Activated CD4-positive, alpha-beta T cell treated with anti-CD3 and anti-CD28 coated beads for 36 hours (primary cell): ENCODE measurements at regions of chr7 and their contacts with region 1.

Region 1: DNA sequence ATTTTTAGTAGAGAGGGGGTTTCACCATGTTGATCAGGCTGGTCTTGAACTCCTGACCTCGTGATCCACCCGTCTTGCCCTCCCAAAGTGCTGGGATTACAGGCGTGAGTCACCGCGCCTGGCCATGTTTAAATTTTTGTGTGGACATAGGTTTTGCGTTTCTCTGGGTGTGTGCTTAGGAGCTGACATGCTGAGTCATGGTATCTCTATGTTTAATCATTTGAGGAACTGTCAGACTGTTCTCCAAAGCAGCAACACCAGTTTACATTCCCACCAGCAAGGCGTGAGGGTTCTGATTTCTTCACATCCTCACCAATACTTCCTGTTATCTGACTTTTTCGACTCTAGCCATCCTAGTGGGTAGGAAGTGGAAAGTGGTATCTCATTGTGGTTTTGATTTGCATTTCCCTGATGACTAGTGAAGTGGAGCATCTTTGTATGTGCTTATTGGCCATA is 153.7 kb downstream of the DNAJB6 start:
- DNase-seq: peak; percentile 58
- ATAC-seq: peak; percentile 81
- H3K4me3 Mint-ChIP-seq: no peak overlapping the region
- H3K27ac Mint-ChIP-seq: peak overlapping the region; percentile 35
- H3K4me1 Mint-ChIP-seq: peaks cover 35% of the 10 kb centered on the region
- H3K27me3 Mint-ChIP-seq: peaks cover 9% of the 10 kb centered on the region

Region 2: GRCh38 chr7:157299613-157300368 is 190.7 kb before region 1 on chr7:
- CTCF ChIA-PET with region 1: no interaction called
- POLR2A ChIA-PET with region 1: no interaction called
- intact Hi-C with region 1: loop called (anchors 10 kb)
- DNase-seq: peak; percentile 75
- ATAC-seq: peak; percentile 32
- H3K4me3 Mint-ChIP-seq: peak overlapping the region; percentile 12
- H3K27ac Mint-ChIP-seq: peak overlapping the region; percentile 84
- H3K4me1 Mint-ChIP-seq: peaks cover 35% of the 10 kb centered on the region
- H3K27me3 Mint-ChIP-seq: no peaks in the 10 kb centered on the region

Region 3: GRCh38 chr7:157457441-157458253 is 32.8 kb before region 1 on chr7:
- CTCF ChIA-PET with region 1: no interaction called
- POLR2A ChIA-PET with region 1: no interaction called
- intact Hi-C with region 1: no loop called
- DNase-seq: no peak
- ATAC-seq: no peak
- H3K4me3 Mint-ChIP-seq: no peak overlapping the region
- H3K27ac Mint-ChIP-seq: no peak overlapping the region
- H3K4me1 Mint-ChIP-seq: peaks cover 1% of the 10 kb centered on the region
- H3K27me3 Mint-ChIP-seq: no peaks in the 10 kb centered on the region

Region 4: GRCh38 chr7:157568770-157569584 is 78.5 kb after region 1 on chr7:
- CTCF ChIA-PET with region 1: no interaction called
- POLR2A ChIA-PET with region 1: no interaction called
- intact Hi-C with region 1: loop called (anchors 2 to 5 kb)
- DNase-seq: peak; percentile 80
- ATAC-seq: peak; percentile 74
- H3K4me3 Mint-ChIP-seq: peak overlapping the region; percentile 63
- H3K27ac Mint-ChIP-seq: peak overlapping the region; percentile 55
- H3K4me1 Mint-ChIP-seq: peaks cover 33% of the 10 kb centered on the region
- H3K27me3 Mint-ChIP-seq: no peaks in the 10 kb centered on the region

Region 5: DNA sequence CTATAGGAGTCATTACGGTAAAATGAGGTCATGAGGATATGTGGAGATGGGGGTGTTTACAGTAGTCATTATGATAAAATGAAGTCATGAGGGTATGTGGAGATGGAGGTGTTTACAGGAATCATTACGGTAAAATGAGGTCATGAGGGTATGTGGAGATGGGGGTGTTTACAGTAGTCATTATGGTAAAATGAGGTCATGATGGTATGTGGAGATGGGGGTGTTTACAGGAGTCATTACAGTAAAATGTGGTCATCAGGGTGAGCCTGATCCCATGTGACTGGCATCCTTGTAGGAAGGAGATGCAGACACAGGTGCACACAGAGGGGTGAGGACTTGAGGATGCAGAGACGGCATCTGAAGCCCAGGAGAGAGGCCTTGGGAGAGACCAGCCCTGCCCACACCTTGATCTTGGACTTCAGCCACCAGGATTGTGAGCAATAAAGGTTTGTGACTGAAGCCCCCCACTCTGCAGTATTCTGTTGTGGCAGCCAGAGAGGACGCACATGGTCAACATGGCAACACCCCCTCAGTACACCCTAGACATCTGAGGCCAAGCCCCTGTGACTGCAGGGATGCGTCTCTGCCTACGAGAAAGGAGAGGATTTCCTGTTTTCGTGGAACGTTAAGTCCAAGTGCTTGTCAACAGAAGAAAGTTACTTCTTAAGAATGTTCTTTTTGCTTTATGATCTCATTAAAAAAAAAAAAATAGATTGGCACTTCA is 390.7 kb after region 1 on chr7:
- CTCF ChIA-PET with region 1: no interaction called
- POLR2A ChIA-PET with region 1: no interaction called
- intact Hi-C with region 1: loop called in 1 of 2 experiments (anchors 5 kb)
- DNase-seq: peak; percentile 36
- ATAC-seq: peak; percentile 85
- H3K4me3 Mint-ChIP-seq: no peak overlapping the region
- H3K27ac Mint-ChIP-seq: peak overlapping the region; percentile 28
- H3K4me1 Mint-ChIP-seq: peaks cover 9% of the 10 kb centered on the region
- H3K27me3 Mint-ChIP-seq: no peaks in the 10 kb centered on the region